Sigmoid colon (tissue), 7 donors: ENCODE measurements at regions of chr22 and their contacts with region 1.

Region 1: GRCh38 chr22:35627264-35628041 is 10.3 kb upstream of the MB start:
- DNase-seq: peak; percentile 93
- H3K4me3 ChIP-seq: peak overlapping the region; percentile 34 to 64 (median 58)
- H3K27ac ChIP-seq: peak overlapping the region; percentile 85 to 94 (median 90)
- H3K4me1 ChIP-seq: peaks cover 0 to 26% (median 23%) of the 10 kb centered on the region in 4 donors
- H3K27me3 ChIP-seq: no peaks in the 10 kb centered on the region
- CTCF ChIP-seq: peak in 2 of 4 experiments; percentile 24 to 47
- EP300 ChIP-seq: no peak
- POLR2A ChIP-seq: peak; percentile 7 to 14

Region 2: GRCh38 chr22:35350539-35351503 is 276.6 kb before region 1 on chr22:
- intact Hi-C with region 1: loop called (anchors 1 kb)
- DNase-seq: peak; percentile 98
- H3K4me3 ChIP-seq: peak overlapping the region; percentile 27 to 57 (median 52)
- H3K27ac ChIP-seq: peak overlapping the region; percentile 82 to 88 (median 85)
- H3K4me1 ChIP-seq: peaks cover 6 to 41% (median 25%) of the 10 kb centered on the region in 4 donors
- H3K27me3 ChIP-seq: no peaks in the 10 kb centered on the region
- CTCF ChIP-seq: peak; percentile 79 to 97 (median 89)
- EP300 ChIP-seq: peak in 1 of 4 donors; percentile 34
- POLR2A ChIP-seq: peak in 1 of 2 donors; percentile 44

Region 3: GRCh38 chr22:35430897-35431322 is 196.5 kb before region 1 on chr22:
- intact Hi-C with region 1: loop called (anchors 1 kb)
- DNase-seq: peak; percentile 97
- H3K4me3 ChIP-seq: no peak overlapping the region
- H3K27ac ChIP-seq: peak overlapping the region; percentile 45 to 76 (median 73)
- H3K4me1 ChIP-seq: peaks cover 0 to 22% (median 19%) of the 10 kb centered on the region in 4 donors
- H3K27me3 ChIP-seq: no peaks in the 10 kb centered on the region
- CTCF ChIP-seq: peak; percentile 98 to 99 (median 99)
- EP300 ChIP-seq: peak in 3 of 4 donors; percentile 22 to 78 (median 55)
- POLR2A ChIP-seq: no peak

Region 4: GRCh38 chr22:35742342-35743100 is 115.1 kb after region 1 on chr22:
- intact Hi-C with region 1: loop called (anchors 5 kb)
- DNase-seq: no peak
- H3K4me3 ChIP-seq: no peak overlapping the region
- H3K27ac ChIP-seq: peak overlapping the region in 1 of 4 donors; percentile 16
- H3K4me1 ChIP-seq: peaks cover 0 to 18% (median 13%) of the 10 kb centered on the region in 4 donors
- H3K27me3 ChIP-seq: no peaks in the 10 kb centered on the region
- CTCF ChIP-seq: no peak
- EP300 ChIP-seq: no peak
- POLR2A ChIP-seq: no peak

Region 5: GRCh38 chr22:35840302-35840739 is 212.9 kb after region 1 on chr22:
- intact Hi-C with region 1: loop called (anchors 2 kb)
- DNase-seq: peak; percentile 94
- H3K4me3 ChIP-seq: peak overlapping the region; percentile 26 to 53 (median 46)
- H3K27ac ChIP-seq: peak overlapping the region; percentile 76 to 86 (median 82)
- H3K4me1 ChIP-seq: peaks cover 0 to 81% (median 52%) of the 10 kb centered on the region in 4 donors
- H3K27me3 ChIP-seq: no peaks in the 10 kb centered on the region
- CTCF ChIP-seq: no peak
- EP300 ChIP-seq: peak in 1 of 4 donors; percentile 3
- POLR2A ChIP-seq: peak in 1 of 2 donors; percentile 40

Region 6: DNA sequence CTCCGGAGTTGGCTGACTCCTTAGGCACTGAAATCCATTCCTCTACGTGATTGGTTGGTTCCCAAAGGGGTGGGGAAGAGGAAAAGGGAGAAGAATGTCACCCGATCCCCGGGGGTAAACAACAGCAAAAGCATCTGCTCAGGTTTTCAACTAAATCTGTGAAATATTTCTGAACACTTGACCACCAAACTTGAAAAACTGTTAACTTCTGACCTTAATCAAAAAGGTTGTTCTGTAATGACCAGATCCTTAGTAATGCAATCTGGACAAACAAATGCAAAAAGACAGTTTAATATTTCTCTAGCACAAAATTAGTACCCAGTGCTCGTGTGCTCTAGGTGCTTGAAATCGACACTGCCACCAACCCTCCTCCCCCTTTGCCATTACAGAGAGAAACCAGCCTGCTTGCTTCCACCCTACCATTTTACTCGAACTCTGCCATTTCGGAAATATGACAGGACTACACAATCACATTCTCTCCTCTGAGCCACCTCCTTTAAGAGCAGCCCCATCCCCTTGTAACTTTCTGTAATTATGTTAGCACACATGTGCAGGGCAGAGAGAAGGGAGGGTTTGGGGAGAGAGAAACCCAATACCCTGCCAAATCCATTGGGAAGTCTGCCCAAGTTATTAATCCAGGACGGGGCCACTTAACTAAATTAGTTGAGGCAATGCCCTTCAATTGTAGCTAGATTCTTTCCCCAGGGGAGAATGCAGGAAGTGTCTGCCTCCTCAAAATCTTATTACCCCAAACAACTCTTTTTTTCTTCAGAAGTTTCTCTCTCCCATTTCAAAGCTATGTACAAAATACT is 287.4 kb after region 1 on chr22:
- intact Hi-C with region 1: loop called (anchors 2 kb)
- DNase-seq: peak; percentile 83
- H3K4me3 ChIP-seq: peak overlapping the region; percentile 18 to 51 (median 46)
- H3K27ac ChIP-seq: peak overlapping the region; percentile 80 to 87 (median 86)
- H3K4me1 ChIP-seq: peaks cover 0 to 95% (median 79%) of the 10 kb centered on the region in 4 donors
- H3K27me3 ChIP-seq: no peaks in the 10 kb centered on the region
- CTCF ChIP-seq: no peak
- EP300 ChIP-seq: no peak
- POLR2A ChIP-seq: no peak

Region 7: GRCh38 chr22:36065775-36066559 is 438.5 kb after region 1 on chr22:
- intact Hi-C with region 1: loop called (anchors 2 kb)
- DNase-seq: peak; percentile 97
- H3K4me3 ChIP-seq: peak overlapping the region; percentile 21 to 59 (median 48)
- H3K27ac ChIP-seq: peak overlapping the region; percentile 83 to 95 (median 85)
- H3K4me1 ChIP-seq: peaks cover 0 to 20% (median 16%) of the 10 kb centered on the region in 4 donors
- H3K27me3 ChIP-seq: no peaks in the 10 kb centered on the region
- CTCF ChIP-seq: peak; percentile 100
- EP300 ChIP-seq: no peak
- POLR2A ChIP-seq: no peak